HepG2 (cell line): ENCODE measurements at regions of chr22 and their contacts with region 1.

Region 1: DNA sequence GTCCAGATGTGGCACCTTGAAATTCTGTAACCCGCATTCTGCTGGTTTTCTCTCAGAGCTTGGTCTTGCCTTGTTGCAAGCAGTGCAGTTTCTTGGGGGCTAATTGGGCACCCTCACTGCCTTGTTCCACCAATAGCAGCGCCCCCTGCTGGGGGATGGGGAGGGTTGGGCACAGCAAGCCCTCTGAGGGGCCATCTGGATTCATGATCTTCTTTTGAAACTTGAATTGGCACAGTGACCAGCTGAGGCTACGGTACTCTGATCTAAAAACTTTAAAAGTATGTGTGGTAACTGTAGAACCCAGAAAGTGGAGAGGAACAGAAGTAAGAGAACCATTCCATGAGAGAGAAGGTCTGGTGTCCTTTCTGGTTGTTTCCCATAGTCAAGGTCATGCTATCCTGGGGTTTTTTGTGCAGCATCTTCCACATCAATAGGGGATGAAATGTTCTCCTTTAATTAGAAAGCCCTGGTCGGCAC is 64.2 kb downstream of the MED15 start:
- DNase-seq: peak; percentile 16
- ATAC-seq: peak; percentile 72
- H3K4me3 ChIP-seq: no peak overlapping the region
- H3K27ac ChIP-seq: no peak overlapping the region
- H3K4me1 ChIP-seq: no peaks in the 10 kb centered on the region
- H3K27me3 ChIP-seq: no peaks in the 10 kb centered on the region
- CTCF ChIP-seq: peak; percentile 70
- EP300 ChIP-seq: no peak
- POLR2A ChIP-seq: no peak
- RAD21 ChIP-seq: no peak

Region 2: DNA sequence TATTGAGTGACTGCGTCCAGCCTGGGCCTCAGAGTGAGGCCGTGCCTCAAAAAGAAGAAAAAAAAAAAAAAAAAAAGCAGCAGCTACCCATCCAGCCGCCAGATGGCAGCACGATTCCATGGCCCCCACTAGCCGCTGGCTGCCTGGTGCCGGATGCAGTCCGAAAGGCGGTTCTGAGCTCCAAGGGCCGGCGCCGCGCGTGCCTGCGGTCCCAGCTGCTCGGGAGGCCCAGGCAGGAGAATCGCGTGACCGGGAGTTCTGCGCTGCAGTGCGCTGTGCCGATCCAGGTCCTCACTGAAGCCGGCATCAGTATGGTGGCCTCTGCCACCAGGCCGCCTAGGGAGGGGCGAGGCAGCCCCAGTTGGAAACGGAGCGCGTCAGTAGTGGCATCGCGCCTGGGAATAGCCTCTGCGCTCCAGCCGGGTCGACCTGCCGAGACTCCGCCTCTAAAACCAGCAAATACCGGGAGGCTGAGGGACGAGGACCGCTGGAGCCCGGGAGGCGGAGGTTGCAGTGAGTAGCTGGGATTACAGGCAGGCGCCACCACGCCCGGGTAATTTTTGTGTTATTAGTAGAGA is 153.3 kb before region 1 on chr22:
- CTCF ChIA-PET with region 1: no interaction called
- POLR2A ChIA-PET with region 1: no interaction called
- in situ Hi-C with region 1: loop called (anchors 10 kb)
- intact Hi-C with region 1: no loop called
- DNase-seq: peak; percentile 57
- ATAC-seq: peak; percentile 78
- H3K4me3 ChIP-seq: peak overlapping the region; percentile 51 to 74 (median 57); a peak in 5 of 6 replicates
- H3K27ac ChIP-seq: no peak overlapping the region
- H3K4me1 ChIP-seq: peaks cover 52% of the 10 kb centered on the region
- H3K27me3 ChIP-seq: peaks cover 0 to 8% of the 10 kb centered on the region in 2 experiments; a peak in 3 of 5 replicates
- CTCF ChIP-seq: peak; percentile 93
- EP300 ChIP-seq: no peak
- POLR2A ChIP-seq: no peak
- RAD21 ChIP-seq: peak; percentile 72

Region 3: DNA sequence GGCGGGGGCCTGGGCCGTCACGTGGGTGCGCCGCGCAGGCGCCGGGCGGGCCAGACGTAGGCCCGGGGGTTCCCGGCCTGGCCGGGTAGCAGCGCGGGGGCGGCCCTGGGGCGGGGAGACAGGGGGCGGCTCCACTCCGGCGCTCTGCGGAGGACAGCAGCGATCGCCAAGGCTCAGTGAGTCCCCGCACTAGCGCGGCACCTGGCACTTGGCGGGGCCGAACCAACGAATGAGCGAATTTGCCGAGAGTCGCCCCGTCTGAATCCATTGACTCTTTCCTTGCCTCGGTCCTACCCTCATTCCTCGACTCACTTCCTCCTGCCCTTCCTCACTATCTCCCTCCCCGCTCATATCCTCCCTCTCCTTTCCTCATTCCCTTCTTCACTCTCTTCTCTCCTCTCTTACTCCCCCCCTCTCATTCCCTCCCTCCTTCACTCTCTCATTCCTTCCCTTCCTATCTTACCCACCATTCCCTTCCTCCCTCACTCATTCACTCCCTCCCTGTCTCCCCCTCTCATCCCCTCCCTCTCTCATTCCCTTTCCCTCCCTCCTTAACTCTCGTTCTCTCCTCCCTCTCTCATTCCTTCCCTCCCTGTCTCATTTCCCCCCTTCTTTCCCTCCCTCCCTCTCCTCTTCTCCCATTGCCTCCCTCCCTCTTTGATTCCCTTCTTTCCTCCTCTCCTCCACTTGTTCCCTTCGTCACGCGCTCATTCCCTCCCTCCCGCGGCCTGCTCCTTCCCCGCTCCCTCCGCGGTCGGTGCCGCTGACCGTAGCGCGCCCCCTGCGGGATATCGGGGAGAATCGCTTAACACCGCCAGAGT is 75.5 kb before region 1 on chr22:
- CTCF ChIA-PET with region 1: no interaction called
- POLR2A ChIA-PET with region 1: no interaction called
- in situ Hi-C with region 1: no loop called
- intact Hi-C with region 1: no loop called
- DNase-seq: peak; percentile 76
- ATAC-seq: peak; percentile 95
- H3K4me3 ChIP-seq: peak overlapping the region; percentile 65 to 88 (median 73)
- H3K27ac ChIP-seq: peak overlapping the region; percentile 81
- H3K4me1 ChIP-seq: peaks cover 40% of the 10 kb centered on the region
- H3K27me3 ChIP-seq: no peaks in the 10 kb centered on the region; a peak in 1 of 5 replicates
- CTCF ChIP-seq: peak; percentile 95
- EP300 ChIP-seq: no peak
- POLR2A ChIP-seq: peak; percentile 85 to 87
- RAD21 ChIP-seq: peak; percentile 50

Region 4: GRCh38 chr22:20606041-20606783 is 34.6 kb after region 1 on chr22:
- CTCF ChIA-PET with region 1: no interaction called
- POLR2A ChIA-PET with region 1: no interaction called
- in situ Hi-C with region 1: no loop called
- intact Hi-C with region 1: no loop called
- DNase-seq: peak; percentile 78
- ATAC-seq: peak; percentile 77
- H3K4me3 ChIP-seq: no peak overlapping the region; a peak in 1 of 6 replicates
- H3K27ac ChIP-seq: no peak overlapping the region
- H3K4me1 ChIP-seq: peaks cover 13% of the 10 kb centered on the region
- H3K27me3 ChIP-seq: peaks cover 3 to 65% of the 10 kb centered on the region in 2 experiments; a peak in 4 of 5 replicates
- CTCF ChIP-seq: peak; percentile 95
- EP300 ChIP-seq: no peak
- POLR2A ChIP-seq: no peak
- RAD21 ChIP-seq: peak; percentile 91

Region 5: GRCh38 chr22:20637750-20638506 is 66.4 kb after region 1 on chr22:
- CTCF ChIA-PET with region 1: no interaction called
- POLR2A ChIA-PET with region 1: no interaction called
- in situ Hi-C with region 1: loop called (anchors 10 kb)
- intact Hi-C with region 1: no loop called
- DNase-seq: no peak
- ATAC-seq: no peak
- H3K4me3 ChIP-seq: no peak overlapping the region
- H3K27ac ChIP-seq: no peak overlapping the region
- H3K4me1 ChIP-seq: peaks cover 9% of the 10 kb centered on the region
- H3K27me3 ChIP-seq: 0 out of 5 replicates have a peak, but pooled peaks cover 0 to 3% of the 10 kb centered on the region in 2 experiments
- CTCF ChIP-seq: no peak
- EP300 ChIP-seq: no peak
- POLR2A ChIP-seq: no peak
- RAD21 ChIP-seq: no peak

Region 6: DNA sequence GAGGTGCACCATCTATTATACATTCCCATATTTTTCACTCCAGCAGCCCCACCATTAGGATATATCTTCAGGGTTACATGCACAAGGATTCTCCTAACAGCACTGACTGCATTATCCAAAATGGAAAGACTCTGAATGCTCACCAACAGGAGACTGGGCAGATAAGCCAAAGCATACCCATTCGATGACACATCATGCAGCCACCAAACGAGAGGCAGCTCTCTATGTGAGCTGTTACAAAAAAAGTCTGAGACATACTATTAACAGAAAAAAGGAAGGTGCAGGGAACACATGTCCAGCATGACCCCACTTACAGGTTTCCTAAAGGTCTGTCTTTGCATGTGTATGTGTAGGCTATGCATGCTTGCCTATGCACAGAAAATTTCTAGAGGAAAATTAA is 190.0 kb after region 1 on chr22:
- CTCF ChIA-PET with region 1: no interaction called
- POLR2A ChIA-PET with region 1: no interaction called
- in situ Hi-C with region 1: no loop called
- intact Hi-C with region 1: no loop called
- DNase-seq: no peak
- ATAC-seq: no peak
- H3K4me3 ChIP-seq: no peak overlapping the region
- H3K27ac ChIP-seq: no peak overlapping the region
- H3K4me1 ChIP-seq: peaks cover 8% of the 10 kb centered on the region
- H3K27me3 ChIP-seq: no peaks in the 10 kb centered on the region
- CTCF ChIP-seq: no peak
- EP300 ChIP-seq: no peak
- POLR2A ChIP-seq: no peak
- RAD21 ChIP-seq: no peak